Head of caudate nucleus (tissue), 42 donors: ENCODE measurements at regions of chr10 and their contacts with region 1.

Region 1: GRCh38 chr10:95374597-95375209 is 83.9 kb upstream of the PDLIM1 start:
- DNase-seq: peak; percentile 73 to 95 (median 87)

Region 2: DNA sequence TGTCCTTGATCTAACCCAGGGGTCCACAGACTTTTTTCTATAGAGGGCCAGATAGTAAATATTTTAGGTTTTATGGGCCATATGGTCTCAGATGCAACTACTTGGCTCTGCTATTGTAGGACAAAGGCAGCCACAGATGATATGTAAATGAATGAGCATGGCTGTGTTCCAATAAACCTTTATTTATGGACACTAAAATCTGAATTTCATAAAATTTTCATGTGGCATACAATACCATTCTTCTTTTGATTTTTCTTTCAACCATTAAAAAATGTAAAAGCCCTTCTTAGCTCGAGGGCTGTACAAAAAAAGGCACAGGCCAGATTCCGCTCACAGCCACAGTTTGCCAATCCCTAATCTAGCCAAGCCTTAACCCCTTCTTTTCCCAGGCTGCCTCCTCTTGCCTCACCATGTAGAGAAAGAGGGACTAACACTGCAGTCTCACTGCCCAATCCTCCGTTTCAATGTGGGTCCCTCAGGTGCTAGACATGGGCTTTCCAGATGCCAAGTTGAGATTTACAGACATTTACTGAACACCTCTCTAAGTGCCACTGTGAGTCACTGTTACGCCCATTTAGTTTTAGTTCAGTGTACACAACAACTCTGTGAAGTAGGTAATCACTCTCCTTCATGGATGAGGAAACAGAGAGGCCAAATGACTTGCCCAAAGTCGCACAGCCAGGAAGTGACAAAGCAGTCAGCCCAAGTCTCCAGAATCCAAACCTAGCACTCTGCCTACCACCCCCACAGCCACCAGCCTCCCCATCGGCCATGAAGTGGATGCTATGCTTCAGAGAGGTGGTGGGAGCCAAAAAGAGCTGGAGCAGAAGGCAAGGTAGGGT is 48.7 kb after region 1 on chr10:
- intact Hi-C with region 1: loop called (anchors 10 kb)
- DNase-seq: no peak

Region 3: GRCh38 chr10:95601116-95601719 is 226.5 kb after region 1 on chr10:
- intact Hi-C with region 1: loop called (anchors 5 kb)
- DNase-seq: peak; percentile 61 to 91 (median 80)